ENCODE measurements at regions of chr1 and their contacts with region 1.

Region 1: GRCh38 chr1:45512641-45513054 is 9.0 kb downstream of the PRDX1 start:
- DNase-seq: peak; percentile 83
- ATAC-seq: peak; percentile 87
- H3K4me3 Mint-ChIP-seq: no peak overlapping the region
- H3K27ac Mint-ChIP-seq: peak overlapping the region; percentile 45
- H3K4me1 Mint-ChIP-seq: peaks cover 19% of the 10 kb centered on the region
- H3K27me3 Mint-ChIP-seq: no peaks in the 10 kb centered on the region
- CTCF ChIP-seq: peak; percentile 76

Region 2: DNA sequence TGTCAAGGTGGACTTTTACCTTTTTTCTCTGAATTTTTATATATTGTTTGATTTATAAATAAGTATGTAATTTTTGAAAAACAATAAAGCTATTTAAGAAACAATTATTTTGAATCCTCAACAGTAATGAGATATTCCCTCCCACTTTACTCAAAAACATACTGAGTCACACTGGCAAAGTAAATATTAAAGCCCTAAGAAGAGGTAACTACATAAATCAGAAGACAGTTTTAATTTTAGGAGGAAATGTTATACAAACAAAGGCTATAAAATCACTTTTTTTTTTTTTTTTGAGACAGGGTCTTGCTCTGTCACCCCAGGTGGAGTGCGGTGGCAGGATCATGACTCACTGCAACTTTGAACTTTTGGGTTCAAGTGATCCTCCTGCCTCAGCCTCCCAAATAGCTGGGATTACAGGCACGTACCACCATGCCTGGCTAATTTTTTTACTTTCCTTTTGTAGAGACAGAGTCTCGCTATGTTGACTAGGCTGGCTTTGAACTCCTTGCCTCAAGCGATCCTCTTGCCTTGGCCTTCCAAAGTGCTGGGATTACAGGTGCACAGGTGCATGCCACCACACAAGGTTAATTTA is 342.4 kb before region 1 on chr1:
- CTCF ChIA-PET with region 1: no interaction called
- POLR2A ChIA-PET with region 1: no interaction called
- intact Hi-C with region 1: no loop called
- DNase-seq: no peak
- ATAC-seq: no peak
- H3K4me3 Mint-ChIP-seq: no peak overlapping the region
- H3K27ac Mint-ChIP-seq: no peak overlapping the region
- H3K4me1 Mint-ChIP-seq: peaks cover 2% of the 10 kb centered on the region
- H3K27me3 Mint-ChIP-seq: no peaks in the 10 kb centered on the region
- CTCF ChIP-seq: no peak

Region 3: DNA sequence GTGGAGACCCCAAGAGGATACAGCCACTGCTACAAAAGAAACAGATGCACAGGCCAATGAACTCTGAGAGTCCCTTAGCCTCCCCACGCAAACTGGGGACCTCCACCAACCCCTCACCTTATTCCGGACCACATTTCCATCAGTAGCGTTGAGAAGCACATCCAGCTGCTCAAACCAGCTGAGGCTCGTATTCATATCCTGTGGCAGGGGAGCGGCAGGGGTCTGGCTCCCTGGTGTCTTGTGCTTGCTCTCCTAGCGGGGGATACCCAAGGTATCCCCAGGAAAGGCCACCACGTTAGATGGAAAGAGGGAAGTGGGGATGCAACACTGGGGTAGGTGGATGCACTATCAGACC is 13.3 kb before region 1 on chr1:
- CTCF ChIA-PET with region 1: interaction called, 33 read pairs
- POLR2A ChIA-PET with region 1: interaction called, 24 read pairs
- intact Hi-C with region 1: no loop called
- DNase-seq: peak; percentile 39
- ATAC-seq: no peak
- H3K4me3 Mint-ChIP-seq: peak overlapping the region; percentile 98
- H3K27ac Mint-ChIP-seq: peak overlapping the region; percentile 93
- H3K4me1 Mint-ChIP-seq: peaks cover 29% of the 10 kb centered on the region
- H3K27me3 Mint-ChIP-seq: no peaks in the 10 kb centered on the region
- CTCF ChIP-seq: peak; percentile 28

Region 4: DNA sequence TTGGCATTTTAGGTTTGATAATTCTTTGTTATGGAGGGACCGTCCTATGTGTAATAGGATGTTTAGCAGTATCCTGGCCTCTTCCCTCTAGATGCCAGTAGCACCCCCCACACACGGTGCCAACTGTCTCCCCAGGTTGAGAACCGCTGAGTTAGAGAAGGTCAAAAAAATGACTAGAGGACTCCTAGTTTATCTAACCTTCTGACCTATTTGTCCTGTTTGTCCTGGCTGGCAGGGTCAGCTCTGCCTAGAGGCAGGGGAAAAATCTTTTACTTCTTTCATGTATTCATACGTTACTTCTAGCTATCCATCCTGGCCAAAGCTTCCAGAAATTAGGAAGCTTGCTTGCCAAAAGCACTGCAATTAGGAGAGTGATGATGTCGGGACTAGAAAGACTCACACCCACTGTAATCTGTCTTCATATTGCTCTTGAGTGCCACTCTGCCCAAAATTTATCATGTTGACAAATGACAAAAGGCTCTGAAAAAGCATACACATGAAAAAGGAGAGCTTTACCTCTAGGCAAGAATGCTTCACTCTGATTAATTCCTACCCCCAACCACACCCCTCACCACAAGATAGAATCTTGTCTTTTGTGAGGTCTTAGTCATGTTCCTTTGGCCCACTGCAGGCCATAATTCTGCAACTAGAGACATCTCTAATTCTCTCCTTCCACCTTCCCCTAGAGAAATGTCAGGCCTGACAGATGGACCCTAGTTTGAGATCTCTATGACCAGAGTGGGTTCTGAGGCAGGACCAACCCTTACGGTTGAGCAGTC is 23.5 kb after region 1 on chr1:
- CTCF ChIA-PET with region 1: interaction called, 15 read pairs
- POLR2A ChIA-PET with region 1: interaction called, 4 read pairs
- intact Hi-C with region 1: no loop called
- DNase-seq: no peak
- ATAC-seq: peak; percentile 83
- H3K4me3 Mint-ChIP-seq: no peak overlapping the region
- H3K27ac Mint-ChIP-seq: no peak overlapping the region
- H3K4me1 Mint-ChIP-seq: peaks cover 13% of the 10 kb centered on the region
- H3K27me3 Mint-ChIP-seq: peaks cover 1% of the 10 kb centered on the region
- CTCF ChIP-seq: no peak

Region 5: GRCh38 chr1:45543581-45544417 is 31.2 kb after region 1 on chr1:
- CTCF ChIA-PET with region 1: interaction called, 14 read pairs
- POLR2A ChIA-PET with region 1: interaction called, 9 read pairs
- intact Hi-C with region 1: no loop called
- DNase-seq: peak; percentile 83
- ATAC-seq: peak; percentile 90
- H3K4me3 Mint-ChIP-seq: peak overlapping the region; percentile 22
- H3K27ac Mint-ChIP-seq: peak overlapping the region; percentile 73
- H3K4me1 Mint-ChIP-seq: peaks cover 35% of the 10 kb centered on the region
- H3K27me3 Mint-ChIP-seq: peaks cover 1% of the 10 kb centered on the region
- CTCF ChIP-seq: no peak

Region 6: DNA sequence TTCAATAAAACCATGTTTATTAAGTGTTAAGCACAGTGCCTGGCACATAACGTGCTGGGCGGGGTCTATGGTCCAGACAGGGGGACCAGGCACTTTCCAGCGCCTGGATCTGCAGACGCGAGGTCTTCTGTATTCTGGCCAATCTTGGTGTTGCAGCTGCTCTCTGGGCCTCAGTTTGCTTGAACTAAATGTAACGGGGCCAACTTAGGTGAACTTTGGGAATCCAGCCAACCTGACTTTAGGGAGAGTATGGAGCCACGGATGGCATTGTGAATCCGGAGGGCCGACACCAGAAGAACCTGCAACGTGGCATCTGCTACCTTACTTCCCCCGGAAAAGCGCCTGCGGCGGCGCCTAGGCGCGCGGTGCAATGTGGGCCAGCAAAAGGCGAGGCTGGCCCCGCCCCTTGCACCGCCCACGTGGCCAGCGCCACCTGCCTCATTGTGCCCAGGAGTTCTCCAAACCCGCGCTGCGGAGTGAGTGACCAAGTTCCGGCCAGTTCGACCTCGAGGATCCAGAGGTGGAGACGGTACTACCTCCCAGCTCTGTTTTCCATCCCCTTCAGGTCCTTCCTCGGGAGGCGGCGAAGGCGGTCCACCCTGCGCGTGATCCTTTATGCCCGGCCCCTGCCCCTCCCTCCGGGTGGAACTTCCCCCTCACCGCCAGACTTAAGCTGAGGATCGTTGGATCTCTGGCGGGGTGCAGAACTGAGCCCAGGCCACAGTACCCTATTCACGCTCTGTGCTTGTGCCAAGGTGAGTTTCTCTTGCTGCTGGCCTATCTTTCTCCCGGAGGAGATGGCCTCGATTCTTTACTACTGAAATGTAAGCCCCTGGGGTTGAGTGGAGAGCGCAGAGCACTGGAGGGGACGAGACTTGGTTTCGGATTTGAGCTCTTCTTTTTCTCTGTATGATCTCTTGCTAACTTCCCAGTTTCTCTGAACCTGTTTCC is 38.0 kb after region 1 on chr1 and contains the start of gene AKR1A1:
- CTCF ChIA-PET with region 1: interaction called, 14 read pairs
- POLR2A ChIA-PET with region 1: interaction called, 19 read pairs
- intact Hi-C with region 1: loop called (anchors 5 kb)
- DNase-seq: peak; percentile 93
- ATAC-seq: peak; percentile 94
- H3K4me3 Mint-ChIP-seq: peak within 1 kb of the TSS; percentile 100
- H3K27ac Mint-ChIP-seq: peak within 1 kb of the TSS; percentile 98
- H3K4me1 Mint-ChIP-seq: peaks cover 25% of the 10 kb centered on the region
- H3K27me3 Mint-ChIP-seq: peaks cover 1% of the 10 kb centered on the region
- CTCF ChIP-seq: no peak
- total RNA-seq, gene AKR1A1: 184 to 186 TPM

Region 7: DNA sequence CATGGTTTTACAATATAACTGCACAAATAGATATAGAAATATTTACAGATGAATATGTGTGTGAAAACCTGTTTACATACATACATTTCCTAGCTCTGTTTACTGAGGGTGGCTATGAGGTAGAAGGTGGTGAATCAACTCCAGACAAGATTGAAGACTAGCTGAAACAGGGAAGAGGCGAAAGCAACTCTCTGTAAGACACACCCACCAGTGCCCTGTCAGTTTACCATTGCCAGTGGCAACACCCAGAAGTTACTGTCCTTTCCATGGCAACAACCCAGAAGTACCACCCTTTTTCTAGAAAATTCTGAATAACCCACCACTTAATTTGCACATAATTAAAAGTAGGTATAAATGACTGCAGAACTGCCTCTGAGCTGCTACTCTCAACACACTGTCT is 192.0 kb after region 1 on chr1:
- CTCF ChIA-PET with region 1: no interaction called
- POLR2A ChIA-PET with region 1: no interaction called
- intact Hi-C with region 1: no loop called
- DNase-seq: no peak
- ATAC-seq: no peak
- H3K4me3 Mint-ChIP-seq: no peak overlapping the region
- H3K27ac Mint-ChIP-seq: no peak overlapping the region
- H3K4me1 Mint-ChIP-seq: no peaks in the 10 kb centered on the region
- H3K27me3 Mint-ChIP-seq: no peaks in the 10 kb centered on the region
- CTCF ChIP-seq: no peak

Measured in activated CD8-positive, alpha-beta T cell treated with anti-CD3 and anti-CD28 coated beads for 36 hours (primary cell).